Adrenal gland (tissue), 19 donors: ENCODE measurements at regions of chr6 and their contacts with region 1.

Region 1: DNA sequence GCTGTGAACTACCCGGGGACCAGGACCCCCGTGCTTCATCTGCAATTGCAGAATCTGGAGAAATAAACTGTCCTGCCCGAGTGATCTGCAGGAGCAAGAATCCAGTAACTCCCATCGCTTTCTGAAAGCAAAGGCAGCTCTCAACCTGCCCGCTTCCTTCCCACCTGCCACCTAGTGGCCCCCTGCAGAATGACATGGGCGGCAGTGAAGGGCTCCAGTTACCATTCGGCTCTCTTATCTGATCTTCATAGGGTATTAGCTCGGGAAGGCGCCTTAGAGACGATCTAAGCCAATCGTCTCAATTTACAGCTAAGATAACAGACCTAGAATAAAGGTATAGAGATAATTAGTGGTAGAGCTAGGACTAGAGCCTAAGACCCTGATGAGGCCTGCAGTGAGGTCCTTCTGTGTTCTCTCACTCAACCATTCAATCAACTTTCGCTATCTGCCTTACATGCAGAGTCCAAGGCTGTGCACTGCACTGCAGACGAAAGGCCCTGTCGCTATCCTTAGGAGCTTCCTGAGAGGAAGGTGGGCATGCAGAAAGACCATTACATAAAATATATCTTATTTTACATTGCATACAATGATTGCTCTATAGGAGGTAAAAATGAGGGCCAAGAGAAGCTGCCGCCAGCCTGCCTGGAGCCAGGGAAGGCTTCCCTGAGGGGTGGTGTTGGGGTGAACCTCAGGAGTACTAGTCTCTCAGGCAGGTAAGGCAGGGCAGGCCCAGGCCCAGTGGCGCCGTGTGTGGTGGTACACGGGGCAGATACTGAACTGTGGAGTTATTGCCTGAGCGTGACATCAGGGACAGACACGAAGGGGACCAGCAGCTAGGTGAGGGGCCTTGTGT is 7.1 kb upstream of the PSMG4 start:
- DNase-seq: peak; percentile 79 to 92 (median 83)
- H3K4me3 ChIP-seq: no peak overlapping the region
- H3K27ac ChIP-seq: no peak overlapping the region
- H3K4me1 ChIP-seq: peaks cover 0 to 19% of the 10 kb centered on the region in 2 donors
- H3K27me3 ChIP-seq: no peaks in the 10 kb centered on the region
- CTCF ChIP-seq: peak; percentile 93 to 97 (median 95)
- POLR2A ChIP-seq: no peak

Region 2: DNA sequence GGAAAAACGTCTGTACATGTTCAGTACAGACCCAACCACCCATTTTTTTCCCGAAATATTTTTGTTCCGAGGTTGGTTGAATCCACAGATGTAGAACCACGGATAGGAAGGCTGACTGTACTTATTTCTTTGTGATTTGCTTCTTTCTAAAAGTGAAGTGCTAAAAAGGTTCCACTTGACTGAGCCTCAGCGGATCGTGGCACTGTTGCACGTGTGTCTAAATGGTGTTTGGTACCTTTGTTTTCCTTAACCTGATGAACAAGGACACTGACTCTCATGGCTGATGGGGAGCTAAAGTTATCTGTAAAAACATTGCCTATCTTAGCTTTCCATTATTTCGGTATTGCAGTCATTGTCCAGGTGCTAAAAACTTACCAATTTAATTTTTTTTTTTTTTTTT is 127.0 kb before region 1 on chr6:
- intact Hi-C with region 1: loop called (anchors 5 kb)
- DNase-seq: no peak
- H3K4me3 ChIP-seq: no peak overlapping the region
- H3K27ac ChIP-seq: no peak overlapping the region
- H3K4me1 ChIP-seq: no peaks in the 10 kb centered on the region
- H3K27me3 ChIP-seq: no peaks in the 10 kb centered on the region
- CTCF ChIP-seq: no peak
- POLR2A ChIP-seq: no peak

Region 3: GRCh38 chr6:3162565-3163247 is 89.0 kb before region 1 on chr6:
- intact Hi-C with region 1: loop called in 1 of 2 experiments (anchors 10 kb)
- DNase-seq: peak; percentile 59 to 76 (median 68)
- H3K4me3 ChIP-seq: peak overlapping the region in 2 of 4 donors; percentile 58 to 82
- H3K27ac ChIP-seq: peak overlapping the region; percentile 46 to 89 (median 66)
- H3K4me1 ChIP-seq: no peaks in the 10 kb centered on the region
- H3K27me3 ChIP-seq: no peaks in the 10 kb centered on the region
- CTCF ChIP-seq: no peak
- POLR2A ChIP-seq: peak; percentile 19 to 29